Naive thymus-derived CD4-positive, alpha-beta T cell (primary cell): ENCODE measurements at regions of chr5 and their contacts with region 1.

Region 1: DNA sequence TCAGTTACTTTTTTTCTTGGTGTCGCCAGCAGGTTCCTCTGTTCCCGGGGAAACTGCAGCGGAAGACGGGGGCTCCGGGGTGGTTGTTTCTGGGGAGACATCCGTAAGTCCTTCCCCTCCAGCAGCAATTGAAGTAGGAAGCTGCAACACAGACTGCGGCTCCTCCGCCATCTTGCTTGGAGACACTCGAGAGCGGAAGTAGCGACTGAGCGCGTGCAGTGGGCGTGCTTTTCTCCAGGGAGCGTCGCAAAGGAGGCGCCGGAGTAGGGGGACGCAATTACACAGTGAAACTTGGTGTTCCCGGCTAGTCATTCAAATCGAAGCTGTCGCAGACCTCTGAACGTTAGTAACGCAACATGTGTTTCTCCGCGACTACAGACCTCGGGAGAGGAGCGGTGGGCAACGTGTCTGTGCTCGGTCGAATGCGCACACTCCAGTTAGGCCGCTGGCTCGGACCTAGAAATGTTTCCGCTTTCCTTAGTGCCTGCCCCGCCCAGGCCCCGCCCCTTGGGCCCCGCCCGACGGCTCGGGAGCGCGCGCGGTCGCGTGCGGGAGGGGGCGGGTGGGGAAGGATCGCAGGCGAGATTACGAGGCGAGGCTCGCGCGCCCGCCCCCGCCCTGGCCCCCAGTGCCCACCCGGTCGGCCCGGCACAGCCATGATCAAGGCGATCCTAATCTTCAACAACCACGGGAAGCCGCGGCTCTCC is at the starts of genes AP3S1 and ATG12:
- DNase-seq: peak; percentile 89 to 96 (median 94)
- ATAC-seq: peak; percentile 92
- H3K4me3 ChIP-seq: peak within 1 kb of the TSS; percentile 81
- H3K4me3 Mint-ChIP-seq: peak within 1 kb of the TSS; percentile 97 to 100 (median 99)
- H3K27ac ChIP-seq: peak within 1 kb of the TSS; percentile 83
- H3K27ac Mint-ChIP-seq: peak within 1 kb of the TSS; percentile 97 to 100 (median 99)
- H3K4me1 ChIP-seq: peaks cover 36 to 37% of the 10 kb centered on the region in 2 donors
- H3K4me1 Mint-ChIP-seq: peaks cover 34 to 83% (median 61%) of the 10 kb centered on the region in 7 donors
- H3K27me3 ChIP-seq: no peaks in the 10 kb centered on the region
- H3K27me3 Mint-ChIP-seq: peaks cover 0 to 7% (median 0%) of the 10 kb centered on the region in 5 donors
- total RNA-seq, gene AP3S1: 22.2 to 55.2 (median 43.3) TPM
- total RNA-seq, gene ATG12: 47.9 to 84.9 (median 60.0) TPM

Region 2: DNA sequence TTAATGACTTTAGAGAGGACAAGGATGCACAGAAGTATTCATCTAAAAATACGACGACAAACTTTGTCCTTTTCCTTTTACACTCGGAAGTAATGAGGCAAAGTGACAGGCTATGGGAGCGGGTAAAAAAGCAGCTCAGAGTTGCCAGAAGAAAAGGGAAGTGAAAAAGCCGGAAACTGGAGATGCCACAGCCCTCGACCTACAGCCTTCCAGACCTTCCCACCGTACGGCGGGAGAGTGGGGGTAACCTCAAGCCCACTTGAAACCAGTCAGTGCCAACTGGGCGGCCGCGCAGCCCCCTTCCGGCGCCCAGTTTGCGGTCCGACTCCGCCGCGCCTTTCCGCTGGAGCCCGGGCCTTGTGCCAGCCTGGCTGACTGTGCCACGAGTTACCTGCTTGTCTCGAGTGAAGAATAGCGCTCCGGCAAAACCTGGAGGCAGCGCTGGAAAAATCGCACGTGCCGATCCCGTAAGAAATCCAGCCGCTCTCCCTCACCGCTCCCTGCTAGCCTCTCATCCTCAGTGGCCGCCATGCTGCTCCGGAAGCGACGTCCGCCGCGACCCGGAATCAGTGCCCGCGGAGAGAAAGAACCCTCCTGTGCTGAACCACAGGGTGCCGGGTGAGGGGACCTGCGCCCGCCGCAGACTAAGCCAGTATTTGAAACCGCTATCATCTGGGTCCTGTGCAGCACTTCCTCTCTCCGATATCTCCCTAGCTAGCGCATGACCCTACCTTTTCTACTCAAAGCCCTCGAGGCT is 579.0 kb before region 1 on chr5 and contains the start of gene PGGT1B:
- CTCF ChIA-PET with region 1: no interaction called
- POLR2A ChIA-PET with region 1: interaction called, 4 read pairs
- intact Hi-C with region 1: loop called in 1 of 2 experiments (anchors 1 kb)
- DNase-seq: peak; percentile 45 to 69 (median 64)
- ATAC-seq: peak; percentile 94
- H3K4me3 ChIP-seq: peak within 1 kb of the TSS; percentile 94
- H3K4me3 Mint-ChIP-seq: peak within 1 kb of the TSS; percentile 91 to 100 (median 96)
- H3K27ac ChIP-seq: peak within 1 kb of the TSS; percentile 76
- H3K27ac Mint-ChIP-seq: peak within 1 kb of the TSS; percentile 83 to 96 (median 94)
- H3K4me1 ChIP-seq: peaks cover 15 to 23% of the 10 kb centered on the region in 2 donors
- H3K4me1 Mint-ChIP-seq: peaks cover 33 to 59% (median 43%) of the 10 kb centered on the region in 7 donors
- H3K27me3 ChIP-seq: no peaks in the 10 kb centered on the region
- H3K27me3 Mint-ChIP-seq: peaks cover 0 to 4% (median 0%) of the 10 kb centered on the region in 5 donors
- total RNA-seq, gene PGGT1B: 34.5 to 49.1 (median 41.5) TPM

Region 3: DNA sequence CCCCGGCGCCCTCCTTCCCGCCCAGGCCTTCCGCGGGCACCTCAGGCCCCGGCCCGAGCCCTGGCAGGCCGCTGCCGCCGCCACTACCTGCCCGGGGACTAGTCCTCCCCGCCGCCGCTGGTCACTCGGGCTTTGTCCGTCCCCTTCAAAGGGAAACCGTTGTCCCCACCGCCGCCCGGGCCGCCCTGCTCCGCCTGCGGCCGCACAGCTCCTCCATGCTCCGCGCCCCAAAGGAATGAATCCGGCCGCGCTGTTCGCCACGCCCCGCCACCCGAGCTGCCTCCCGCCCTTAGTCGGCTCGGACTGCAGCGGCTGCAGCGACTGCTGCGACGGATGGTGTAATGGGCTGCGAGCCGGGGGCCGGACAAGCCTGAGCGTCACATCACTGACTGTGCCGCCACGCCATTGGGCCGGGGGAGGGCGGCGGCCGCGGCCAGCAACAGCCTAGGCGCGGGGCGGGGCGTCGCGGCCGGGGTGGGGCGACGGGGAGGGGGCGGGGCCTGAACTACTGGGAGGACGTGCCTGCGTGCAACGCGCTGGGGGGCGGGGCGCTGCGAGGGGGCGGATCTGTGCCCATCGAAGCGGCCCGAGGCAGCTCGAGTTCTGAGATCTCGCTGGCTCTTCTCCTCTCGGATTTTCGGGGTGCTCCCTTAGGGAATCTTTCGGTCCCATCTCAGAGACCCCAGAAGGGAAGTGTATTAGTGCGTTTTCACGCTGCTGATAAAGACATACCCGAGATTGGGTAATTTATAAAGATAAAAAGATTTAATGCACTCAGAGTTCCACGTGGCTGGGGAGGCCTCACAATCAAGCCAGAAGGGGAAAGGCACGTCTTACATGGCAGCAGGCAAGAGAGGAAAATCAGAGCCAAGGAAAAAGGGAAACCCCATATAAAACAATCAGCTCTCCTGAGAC is 296.8 kb before region 1 on chr5 and contains the start of gene FEM1C:
- CTCF ChIA-PET with region 1: no interaction called
- POLR2A ChIA-PET with region 1: interaction called, 6 read pairs
- intact Hi-C with region 1: loop called (anchors 1 kb)
- DNase-seq: peak; percentile 85 to 97 (median 93)
- ATAC-seq: peak; percentile 93
- H3K4me3 ChIP-seq: peak within 1 kb of the TSS; percentile 70
- H3K4me3 Mint-ChIP-seq: peak within 1 kb of the TSS; percentile 94 to 100 (median 96)
- H3K27ac ChIP-seq: peak within 1 kb of the TSS; percentile 96
- H3K27ac Mint-ChIP-seq: peak within 1 kb of the TSS; percentile 92 to 100 (median 96)
- H3K4me1 ChIP-seq: peaks cover 31 to 38% of the 10 kb centered on the region in 2 donors
- H3K4me1 Mint-ChIP-seq: peaks cover 36 to 49% (median 43%) of the 10 kb centered on the region in 7 donors
- H3K27me3 ChIP-seq: no peaks in the 10 kb centered on the region
- H3K27me3 Mint-ChIP-seq: no peaks in the 10 kb centered on the region
- total RNA-seq, gene FEM1C: 14.9 to 33.1 (median 18.5) TPM

Region 4: GRCh38 chr5:115625579-115626444 is 215.7 kb before region 1 on chr5 and contains the start of gene TMED7:
- CTCF ChIA-PET with region 1: no interaction called
- POLR2A ChIA-PET with region 1: interaction called, 8 read pairs
- intact Hi-C with region 1: loop called (anchors 1 kb)
- DNase-seq: peak; percentile 98 to 100 (median 99)
- ATAC-seq: peak; percentile 97
- H3K4me3 ChIP-seq: peak within 1 kb of the TSS; percentile 93
- H3K4me3 Mint-ChIP-seq: no peak within 1 kb of the TSS
- H3K27ac ChIP-seq: peak within 1 kb of the TSS; percentile 96
- H3K27ac Mint-ChIP-seq: peak within 1 kb of the TSS in 5 of 9 donors; percentile 93 to 98 (median 98)
- H3K4me1 ChIP-seq: peaks cover 20 to 35% of the 10 kb centered on the region in 2 donors
- H3K4me1 Mint-ChIP-seq: peaks cover 11 to 37% (median 27%) of the 10 kb centered on the region in 7 donors
- H3K27me3 ChIP-seq: no peaks in the 10 kb centered on the region
- H3K27me3 Mint-ChIP-seq: peaks cover 0 to 6% (median 0%) of the 10 kb centered on the region in 5 donors
- total RNA-seq, gene TMED7: 41.7 to 58.0 (median 47.5) TPM

Region 5: DNA sequence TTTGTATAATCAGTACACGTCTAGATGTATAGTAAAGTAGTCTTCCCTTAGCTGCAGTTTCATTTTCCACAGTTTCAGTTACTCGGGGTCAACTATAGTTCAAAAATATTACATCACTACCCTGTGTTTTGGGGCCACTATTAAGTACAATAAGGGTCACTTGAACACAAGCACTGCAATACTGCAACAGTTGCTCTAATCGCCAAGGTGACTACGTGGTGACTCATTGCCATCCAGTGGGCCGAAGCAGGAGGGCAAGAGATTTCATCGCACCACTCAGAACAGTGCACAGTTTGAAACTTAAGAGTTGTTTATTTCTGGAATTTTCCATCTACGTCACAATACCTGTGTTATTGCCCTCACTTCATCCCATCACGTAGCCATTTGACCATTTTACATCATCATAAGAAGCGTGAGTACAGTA is 190.6 kb after region 1 on chr5 and contains the start of gene ARL14EPL:
- CTCF ChIA-PET with region 1: no interaction called
- POLR2A ChIA-PET with region 1: no interaction called
- intact Hi-C with region 1: no loop called
- DNase-seq: no peak
- ATAC-seq: peak; percentile 77
- H3K4me3 ChIP-seq: no peak within 1 kb of the TSS
- H3K4me3 Mint-ChIP-seq: no peak within 1 kb of the TSS
- H3K27ac ChIP-seq: no peak within 1 kb of the TSS
- H3K27ac Mint-ChIP-seq: no peak within 1 kb of the TSS
- H3K4me1 ChIP-seq: no peaks in the 10 kb centered on the region
- H3K4me1 Mint-ChIP-seq: no peaks in the 10 kb centered on the region
- H3K27me3 ChIP-seq: no peaks in the 10 kb centered on the region
- H3K27me3 Mint-ChIP-seq: peaks cover 13 to 42% (median 24%) of the 10 kb centered on the region in 5 donors
- total RNA-seq, gene ARL14EPL: not detected

Region 6: GRCh38 chr5:116068028-116068632 is 226.6 kb after region 1 on chr5:
- CTCF ChIA-PET with region 1: interaction called, 3 read pairs
- POLR2A ChIA-PET with region 1: no interaction called
- intact Hi-C with region 1: loop called (anchors 2 to 5 kb)
- DNase-seq: peak in 6 of 9 donors; percentile 31 to 51 (median 38)
- ATAC-seq: peak; percentile 46
- H3K4me3 ChIP-seq: no peak overlapping the region
- H3K4me3 Mint-ChIP-seq: no peak overlapping the region
- H3K27ac ChIP-seq: no peak overlapping the region
- H3K27ac Mint-ChIP-seq: no peak overlapping the region
- H3K4me1 ChIP-seq: no peaks in the 10 kb centered on the region
- H3K4me1 Mint-ChIP-seq: no peaks in the 10 kb centered on the region
- H3K27me3 ChIP-seq: no peaks in the 10 kb centered on the region
- H3K27me3 Mint-ChIP-seq: peaks cover 15 to 50% (median 40%) of the 10 kb centered on the region in 5 donors